HCT116 (cell line): ENCODE measurements at regions of chr10 and their contacts with region 1.

Region 1: DNA sequence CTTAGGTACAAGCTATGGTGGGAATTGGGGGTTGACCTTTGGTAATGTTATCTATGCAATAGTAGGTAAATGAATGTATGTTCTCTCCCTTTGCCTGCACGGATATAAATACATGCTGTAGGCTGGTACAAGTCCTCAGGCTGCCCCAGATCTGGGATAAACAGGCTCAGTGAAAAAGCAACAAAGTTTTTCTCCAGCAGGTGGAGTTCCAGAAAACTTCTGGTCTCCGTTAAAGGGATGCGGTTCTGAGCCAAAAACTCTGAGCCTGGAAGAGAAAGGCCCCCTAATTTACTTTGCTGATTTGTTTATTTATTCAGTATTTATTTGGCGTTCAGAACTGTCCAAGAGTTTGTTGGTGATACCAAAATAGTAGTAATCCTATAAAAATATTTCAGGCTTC is 204.7 kb downstream of the ADRA2A start:
- DNase-seq: peak; percentile 4
- ATAC-seq: peak; percentile 83
- H3K4me3 ChIP-seq: no peak overlapping the region
- H3K27ac ChIP-seq: no peak overlapping the region
- H3K4me1 ChIP-seq: no peaks in the 10 kb centered on the region
- H3K27me3 ChIP-seq: peaks cover 19% of the 10 kb centered on the region
- CTCF ChIP-seq: peak; percentile 38 to 61 (median 57); a peak in 5 of 6 replicates
- POLR2A ChIP-seq: no peak
- RAD21 ChIP-seq: peak; percentile 42; the same call in 1 of the 2 replicates

Region 2: GRCh38 chr10:111360260-111360925 is 78.9 kb after region 1 on chr10:
- CTCF ChIA-PET with region 1: no interaction called
- POLR2A ChIA-PET with region 1: no interaction called
- RAD21 ChIA-PET with region 1: no interaction called
- intact Hi-C with region 1: loop called (anchors 2 kb)
- DNase-seq: peak; percentile 64
- ATAC-seq: peak; percentile 99
- H3K4me3 ChIP-seq: no peak overlapping the region
- H3K27ac ChIP-seq: no peak overlapping the region
- H3K4me1 ChIP-seq: no peaks in the 10 kb centered on the region
- H3K27me3 ChIP-seq: peaks cover 49% of the 10 kb centered on the region
- CTCF ChIP-seq: peak; percentile 73 to 96 (median 78)
- POLR2A ChIP-seq: no peak
- RAD21 ChIP-seq: peak; percentile 93